OCI-LY7 (cell line): ENCODE measurements at regions of chr9 and their contacts with region 1.

Region 1: DNA sequence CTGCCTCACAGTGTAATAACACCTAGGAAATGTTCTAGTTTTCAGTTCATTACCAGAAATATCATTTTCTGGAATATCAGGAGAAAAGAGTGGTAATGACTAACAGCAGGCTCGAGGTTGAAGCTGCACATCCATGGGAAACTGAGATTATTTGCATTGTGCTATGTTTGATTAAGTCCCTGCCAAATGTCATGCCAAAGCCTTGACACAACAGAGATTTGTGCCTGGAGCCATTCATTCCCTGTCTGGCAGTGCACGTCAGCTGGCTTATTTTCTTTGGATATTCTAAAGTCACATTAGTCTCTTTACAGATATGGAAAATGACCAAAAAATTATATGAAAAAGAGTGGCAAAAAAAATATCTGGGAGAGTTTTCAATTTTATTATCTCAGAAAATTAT is 848.0 kb downstream of the PTPRD start:
- DNase-seq: no peak
- H3K4me3 ChIP-seq: no peak overlapping the region
- H3K27ac ChIP-seq: no peak overlapping the region
- H3K4me1 ChIP-seq: peaks cover 4% of the 10 kb centered on the region
- CTCF ChIP-seq: no peak

Region 2: DNA sequence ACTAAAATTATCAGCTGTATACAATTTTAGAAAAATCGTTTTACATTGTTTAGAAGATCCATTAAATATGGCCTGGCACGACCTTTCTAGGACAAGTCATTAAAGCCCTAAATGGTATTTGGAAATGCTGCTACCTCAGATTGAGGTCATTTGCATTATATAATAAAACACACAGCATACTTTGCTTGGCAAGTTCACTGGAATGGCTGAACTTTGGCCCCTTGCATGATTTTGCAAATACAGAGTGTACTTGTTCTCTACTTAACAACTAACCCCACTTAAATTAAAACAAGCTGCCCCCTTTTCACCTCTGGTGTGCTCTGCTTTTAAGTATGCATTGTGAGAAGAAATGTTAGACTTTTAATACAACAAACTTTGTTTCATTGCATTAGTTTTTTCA is 12.1 kb before region 1 on chr9:
- CTCF ChIA-PET with region 1: no interaction called
- POLR2A ChIA-PET with region 1: interaction called, 10 read pairs
- intact Hi-C with region 1: no loop called
- DNase-seq: no peak
- H3K4me3 ChIP-seq: no peak overlapping the region
- H3K27ac ChIP-seq: no peak overlapping the region
- H3K4me1 ChIP-seq: peaks cover 3% of the 10 kb centered on the region
- CTCF ChIP-seq: no peak

Region 3: DNA sequence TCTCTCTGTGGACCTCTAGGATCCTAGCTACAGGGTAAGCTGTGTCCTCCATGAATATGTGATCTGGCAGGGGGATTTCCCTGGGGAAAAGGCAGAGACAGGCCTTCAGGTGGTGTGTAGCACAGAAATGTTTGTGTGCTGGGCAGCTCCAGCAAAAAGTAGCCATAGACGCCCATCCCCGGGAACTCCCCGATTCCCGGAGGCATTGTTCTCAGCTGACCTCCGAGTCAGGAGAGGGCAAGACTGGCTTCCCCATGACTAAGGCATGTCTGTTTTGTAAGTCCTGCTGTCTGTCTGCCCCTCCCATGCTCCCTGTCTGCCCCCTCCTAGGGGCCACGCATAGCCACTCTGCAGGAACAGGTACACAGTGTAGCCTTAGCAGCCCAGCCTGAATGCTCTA is 13.5 kb after region 1 on chr9:
- CTCF ChIA-PET with region 1: no interaction called
- POLR2A ChIA-PET with region 1: interaction called, 17 read pairs
- intact Hi-C with region 1: no loop called
- DNase-seq: no peak
- H3K4me3 ChIP-seq: no peak overlapping the region
- H3K27ac ChIP-seq: no peak overlapping the region
- H3K4me1 ChIP-seq: no peaks in the 10 kb centered on the region
- CTCF ChIP-seq: no peak